ENCODE measurements at regions of chr19 and their contacts with region 1.

Region 1: GRCh38 chr19:53511933-53512374 is 26.0 kb upstream of the ZNF331 start:
- DNase-seq: peak in 4 of 5 donors; percentile 32 to 58 (median 50)
- ATAC-seq: peak in 3 of 4 donors; percentile 77 to 85 (median 83)
- H3K4me3 ChIP-seq: no peak overlapping the region
- H3K27ac ChIP-seq: no peak overlapping the region
- H3K4me1 ChIP-seq: peaks cover 0 to 5% (median 0%) of the 10 kb centered on the region in 12 donors
- H3K27me3 ChIP-seq: peaks cover 0 to 8% (median 0%) of the 10 kb centered on the region in 9 donors
- CTCF ChIP-seq: peak; percentile 44 to 77 (median 60)
- POLR2A ChIP-seq: no peak

Region 2: GRCh38 chr19:51959791-51960190 is 1552.2 kb before region 1 on chr19:
- intact Hi-C with region 1: no loop called
- DNase-seq: no peak
- ATAC-seq: peak in 1 of 4 donors; percentile 41
- H3K4me3 ChIP-seq: no peak overlapping the region
- H3K27ac ChIP-seq: peak overlapping the region in 2 of 12 donors; percentile 32 to 39
- H3K4me1 ChIP-seq: peaks cover 0 to 21% (median 0%) of the 10 kb centered on the region in 12 donors
- H3K27me3 ChIP-seq: no peaks in the 10 kb centered on the region
- CTCF ChIP-seq: no peak
- POLR2A ChIP-seq: no peak

Region 3: DNA sequence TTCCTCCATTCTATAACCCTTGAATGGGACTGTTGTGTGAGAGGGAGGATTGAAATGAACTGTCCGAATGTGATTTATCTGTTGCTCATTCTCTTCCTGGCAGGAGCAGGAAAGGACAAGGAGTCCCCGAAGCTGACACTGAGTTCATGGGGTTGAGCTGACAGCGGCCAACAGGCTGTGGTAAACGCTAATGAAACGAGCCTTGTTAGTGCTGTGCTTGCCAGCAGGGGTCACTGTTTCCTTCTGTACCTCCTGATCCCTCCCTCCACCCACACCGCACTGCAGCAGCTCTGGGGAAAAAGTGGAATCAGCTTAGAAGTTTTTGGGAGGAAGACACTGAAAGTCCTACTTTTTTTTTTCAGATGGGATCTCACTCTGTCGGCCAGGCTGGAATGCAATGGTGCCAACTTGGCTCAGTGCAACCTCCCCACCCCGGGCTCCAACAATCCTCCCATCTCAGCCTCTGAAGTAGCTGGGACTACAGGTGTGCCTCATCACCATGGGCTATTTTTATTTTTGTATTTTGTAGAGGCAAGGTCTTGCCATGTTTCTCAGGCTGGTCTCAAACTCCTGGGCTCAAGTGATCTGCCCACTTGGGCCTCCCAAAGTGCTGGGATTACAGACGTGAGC is 86.9 kb before region 1 on chr19:
- intact Hi-C with region 1: loop called in 7 of 10 experiments (anchors 2 to 5 kb)
- DNase-seq: peak; percentile 72 to 76 (median 76)
- ATAC-seq: peak; percentile 70 to 94 (median 92)
- H3K4me3 ChIP-seq: no peak overlapping the region
- H3K27ac ChIP-seq: no peak overlapping the region
- H3K4me1 ChIP-seq: peaks cover 0 to 5% (median 2%) of the 10 kb centered on the region in 12 donors
- H3K27me3 ChIP-seq: no peaks in the 10 kb centered on the region
- CTCF ChIP-seq: peak; percentile 74 to 85 (median 80)
- POLR2A ChIP-seq: no peak

Measured in heart left ventricle (tissue), 16 donors.